ENCODE measurements at regions of chr6 and their contacts with region 1.

Region 1: GRCh38 chr6:142946181-142946923 is 1.4 kb upstream of the HIVEP2 start:
- DNase-seq: peak; percentile 99
- H3K4me3 ChIP-seq: peak overlapping the region; percentile 79 to 91 (median 86)
- H3K27ac ChIP-seq: peak overlapping the region; percentile 98
- H3K4me1 ChIP-seq: peaks cover 10% of the 10 kb centered on the region
- H3K27me3 ChIP-seq: no peaks in the 10 kb centered on the region
- CTCF ChIP-seq: no peak

Region 2: DNA sequence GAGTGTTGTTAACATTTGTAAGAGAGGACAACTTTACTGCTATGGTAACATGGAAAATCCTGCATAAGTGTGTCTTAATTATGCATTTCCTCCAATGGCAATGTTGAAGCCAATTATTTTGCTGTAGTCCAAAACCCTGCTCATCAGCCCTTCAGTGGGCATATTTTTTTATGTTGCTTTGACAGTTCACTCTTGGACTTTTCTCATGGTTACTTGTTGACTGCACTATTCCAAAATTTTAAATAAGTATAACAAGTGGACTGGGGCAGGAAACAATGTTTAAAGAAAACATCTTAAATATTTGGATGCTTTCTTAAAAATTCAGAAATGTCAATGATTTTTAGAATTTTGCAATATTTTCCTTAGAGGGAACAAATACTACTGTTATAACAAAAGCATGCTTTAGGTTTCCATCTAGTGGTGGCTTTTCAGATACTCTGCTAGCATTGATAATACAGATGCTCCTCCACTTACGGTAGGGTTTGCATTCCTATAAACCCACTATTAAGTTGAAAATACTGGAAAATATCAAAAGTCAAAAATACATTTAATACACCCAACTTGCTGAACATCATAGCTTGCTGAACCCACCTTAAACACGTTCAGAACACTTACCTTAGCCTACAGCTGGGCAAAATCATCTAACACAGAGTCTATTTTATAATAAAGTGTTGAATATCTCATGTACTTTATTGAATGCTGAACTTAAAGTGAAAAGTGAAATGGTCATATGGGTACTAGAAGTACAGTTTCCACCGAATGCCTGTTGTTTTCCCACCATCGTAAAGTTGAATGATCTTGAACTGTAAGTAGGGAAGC is 558.1 kb before region 1 on chr6:
- CTCF ChIA-PET with region 1: no interaction called
- dilution Hi-C with region 1: no loop called
- in situ Hi-C with region 1: no loop called
- intact Hi-C with region 1: no loop called
- DNase-seq: peak; percentile 16
- H3K4me3 ChIP-seq: no peak overlapping the region
- H3K27ac ChIP-seq: no peak overlapping the region
- H3K4me1 ChIP-seq: no peaks in the 10 kb centered on the region
- H3K27me3 ChIP-seq: no peaks in the 10 kb centered on the region
- CTCF ChIP-seq: peak; percentile 70 to 71

Region 3: DNA sequence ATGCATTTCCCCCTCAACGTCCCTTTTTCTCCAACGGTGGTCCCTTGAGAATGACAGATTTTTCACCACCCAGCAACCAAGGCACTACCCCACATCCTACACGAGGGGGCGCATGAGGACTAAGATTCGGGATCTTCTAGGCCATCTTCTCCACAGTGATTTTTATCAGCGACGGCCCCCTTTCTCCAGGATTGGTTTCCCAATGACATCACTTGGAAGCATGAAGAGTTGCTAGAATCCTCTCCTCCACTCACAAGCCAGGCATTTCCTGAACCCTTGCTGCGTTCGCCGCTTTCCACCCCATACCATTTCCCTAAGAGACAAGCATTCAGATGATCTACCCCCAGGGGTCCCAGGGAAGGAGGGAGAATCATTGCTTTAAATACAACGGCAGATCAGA is 253.4 kb before region 1 on chr6:
- CTCF ChIA-PET with region 1: no interaction called
- dilution Hi-C with region 1: no loop called
- in situ Hi-C with region 1: loop called in 1 of 2 experiments (anchors 10 kb)
- intact Hi-C with region 1: loop called (anchors 1 kb)
- DNase-seq: peak; percentile 57
- H3K4me3 ChIP-seq: no peak overlapping the region
- H3K27ac ChIP-seq: no peak overlapping the region
- H3K4me1 ChIP-seq: peaks cover 22% of the 10 kb centered on the region
- H3K27me3 ChIP-seq: no peaks in the 10 kb centered on the region
- CTCF ChIP-seq: peak; percentile 91 to 92

Region 4: GRCh38 chr6:142838821-142839685 is 107.3 kb before region 1 on chr6:
- CTCF ChIA-PET with region 1: no interaction called
- dilution Hi-C with region 1: no loop called
- in situ Hi-C with region 1: no loop called
- intact Hi-C with region 1: loop called (anchors 2 kb)
- DNase-seq: peak; percentile 93
- H3K4me3 ChIP-seq: peak overlapping the region in 2 of 3 experiments; percentile 23 to 34
- H3K27ac ChIP-seq: peak overlapping the region; percentile 90
- H3K4me1 ChIP-seq: peaks cover 33% of the 10 kb centered on the region
- H3K27me3 ChIP-seq: no peaks in the 10 kb centered on the region
- CTCF ChIP-seq: no peak

Region 5: GRCh38 chr6:142927904-142928303 is 18.4 kb before region 1 on chr6:
- CTCF ChIA-PET with region 1: interaction called, 3 read pairs
- dilution Hi-C with region 1: no loop called
- in situ Hi-C with region 1: no loop called
- intact Hi-C with region 1: loop called (anchors 1 kb)
- DNase-seq: no peak
- H3K4me3 ChIP-seq: peak overlapping the region in 2 of 3 experiments; percentile 67 to 83
- H3K27ac ChIP-seq: peak overlapping the region; percentile 94
- H3K4me1 ChIP-seq: peaks cover 25% of the 10 kb centered on the region
- H3K27me3 ChIP-seq: no peaks in the 10 kb centered on the region
- CTCF ChIP-seq: no peak

Region 6: DNA sequence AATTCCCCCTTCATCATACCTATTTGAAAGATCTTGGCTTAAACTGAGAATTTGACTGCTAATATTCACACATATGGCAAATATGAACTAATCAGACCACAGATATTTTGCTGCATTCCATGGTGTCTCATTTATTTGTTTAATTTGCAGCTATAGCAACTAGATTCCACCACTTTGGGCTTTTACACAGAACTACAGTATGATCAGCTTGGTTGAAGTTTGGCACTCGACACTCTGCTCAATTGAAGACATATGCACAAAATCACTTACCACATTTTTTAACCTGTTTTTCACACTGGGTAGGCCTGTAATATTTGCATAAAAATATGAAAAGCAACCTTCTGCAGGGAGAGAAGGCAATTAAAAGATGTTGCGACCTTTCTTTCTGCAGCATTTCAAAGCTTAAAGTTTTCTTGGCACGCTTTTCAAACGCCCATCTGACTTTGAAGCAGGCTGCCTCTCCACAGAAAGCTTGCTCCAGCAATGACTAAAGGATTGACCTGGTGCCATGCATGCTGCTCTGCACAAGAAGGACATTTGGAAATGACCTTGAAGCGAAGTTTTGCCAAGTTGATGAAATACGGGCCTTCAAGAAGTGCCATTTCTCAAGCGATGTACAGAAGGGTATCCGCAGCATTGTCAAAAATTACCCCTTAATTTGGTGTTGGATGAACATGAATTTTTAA is 241.0 kb after region 1 on chr6:
- CTCF ChIA-PET with region 1: no interaction called
- dilution Hi-C with region 1: no loop called
- in situ Hi-C with region 1: no loop called
- intact Hi-C with region 1: loop called (anchors 10 kb)
- DNase-seq: peak; percentile 20
- H3K4me3 ChIP-seq: no peak overlapping the region
- H3K27ac ChIP-seq: no peak overlapping the region
- H3K4me1 ChIP-seq: peaks cover 12% of the 10 kb centered on the region
- H3K27me3 ChIP-seq: no peaks in the 10 kb centered on the region
- CTCF ChIP-seq: no peak

Region 7: DNA sequence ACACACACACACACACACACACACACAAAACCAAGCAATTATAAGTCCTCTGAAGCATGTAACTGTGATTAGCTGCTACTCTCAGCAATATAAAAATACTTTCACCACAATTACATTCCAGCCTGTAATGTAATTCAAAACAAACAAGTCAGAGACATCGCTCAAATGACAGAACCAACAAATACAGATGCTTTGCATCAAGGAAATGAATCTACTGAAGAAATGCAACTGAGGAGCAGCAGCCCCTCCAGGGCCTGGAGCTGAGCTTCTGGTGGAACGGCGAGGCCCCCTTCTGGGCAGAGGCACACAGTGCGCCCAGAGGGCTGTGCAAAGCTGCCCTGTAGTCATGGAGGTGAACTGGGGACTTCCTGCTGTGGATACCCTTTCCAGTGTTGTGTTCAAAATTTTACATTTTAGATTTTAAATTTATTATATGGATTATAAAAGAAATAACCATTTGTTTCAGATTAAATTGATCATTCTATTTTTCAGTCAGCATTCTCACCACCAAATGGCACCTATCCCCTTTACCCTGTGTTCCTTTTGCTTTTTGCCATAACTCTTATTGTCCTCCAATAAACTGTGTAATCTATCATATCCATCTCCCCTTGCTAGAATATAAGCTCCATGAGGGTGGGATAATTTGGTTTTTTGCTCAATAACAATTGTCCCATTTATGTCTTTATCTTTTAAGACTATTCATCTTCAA is 480.9 kb after region 1 on chr6:
- CTCF ChIA-PET with region 1: no interaction called
- dilution Hi-C with region 1: no loop called
- in situ Hi-C with region 1: no loop called
- intact Hi-C with region 1: loop called (anchors 1 kb)
- DNase-seq: peak; percentile 70
- H3K4me3 ChIP-seq: no peak overlapping the region
- H3K27ac ChIP-seq: no peak overlapping the region
- H3K4me1 ChIP-seq: peaks cover 12% of the 10 kb centered on the region
- H3K27me3 ChIP-seq: no peaks in the 10 kb centered on the region
- CTCF ChIP-seq: peak; percentile 98 to 100

Measured in mammary epithelial cell (primary cell).